Dendritic cell treated with granulocyte-macrophage colony-stimulating factor and Interleukin-4, amounts not matched to agents 40 ng/mL and 50 ng/mL, for 4 days (primary cell): ENCODE measurements at regions of chr1 and their contacts with region 1.

Region 1: GRCh38 chr1:89670163-89670562 is 37.2 kb downstream of the LRRC8C start:
- H3K4me3 Mint-ChIP-seq: peak overlapping the region; percentile 49
- H3K27ac Mint-ChIP-seq: peak overlapping the region; percentile 83
- H3K4me1 Mint-ChIP-seq: peaks cover 77% of the 10 kb centered on the region
- H3K27me3 Mint-ChIP-seq: no peaks in the 10 kb centered on the region

Region 2: DNA sequence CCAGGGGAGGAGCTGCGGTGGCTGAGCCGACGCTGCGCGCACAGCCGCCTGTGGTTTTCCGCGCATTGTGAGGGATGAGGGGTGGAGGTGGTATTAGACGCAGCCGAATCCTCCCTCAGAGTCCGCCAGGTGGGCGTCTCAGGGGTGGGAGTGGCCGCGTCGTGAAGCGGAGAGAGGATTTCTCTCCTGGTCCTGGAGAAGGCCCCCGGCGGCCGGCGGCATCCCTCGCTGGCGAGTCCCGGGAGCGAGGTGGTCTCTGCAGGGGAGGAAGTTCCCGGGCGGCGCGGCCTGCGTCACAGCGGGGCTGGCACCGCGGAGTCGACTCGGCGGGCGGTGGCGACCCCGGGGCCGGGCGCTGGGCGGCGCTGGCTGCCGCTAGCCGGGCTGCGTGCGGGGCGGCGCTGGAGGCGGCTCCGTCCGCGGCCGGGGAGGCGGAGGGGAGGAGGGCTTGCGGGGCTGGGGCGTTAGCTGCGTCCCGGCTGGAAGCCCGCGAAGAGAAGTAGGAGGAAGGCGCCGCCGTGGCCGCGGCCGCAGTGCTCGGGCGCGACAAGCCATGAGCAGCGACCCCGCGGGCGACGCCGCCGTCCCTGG is 37.4 kb before region 1 on chr1 and contains the start of gene LRRC8C:
- intact Hi-C with region 1: loop called (anchors 5 kb)
- H3K4me3 Mint-ChIP-seq: peak within 1 kb of the TSS; percentile 85
- H3K27ac Mint-ChIP-seq: peak within 1 kb of the TSS; percentile 90
- H3K4me1 Mint-ChIP-seq: peaks cover 48% of the 10 kb centered on the region
- H3K27me3 Mint-ChIP-seq: no peaks in the 10 kb centered on the region

Region 3: GRCh38 chr1:89706700-89707012 is 36.5 kb after region 1 on chr1:
- intact Hi-C with region 1: loop called (anchors 5 kb)
- H3K4me3 Mint-ChIP-seq: peak overlapping the region; percentile 26
- H3K27ac Mint-ChIP-seq: peak overlapping the region; percentile 82
- H3K4me1 Mint-ChIP-seq: peaks cover 43% of the 10 kb centered on the region
- H3K27me3 Mint-ChIP-seq: no peaks in the 10 kb centered on the region

Region 4: DNA sequence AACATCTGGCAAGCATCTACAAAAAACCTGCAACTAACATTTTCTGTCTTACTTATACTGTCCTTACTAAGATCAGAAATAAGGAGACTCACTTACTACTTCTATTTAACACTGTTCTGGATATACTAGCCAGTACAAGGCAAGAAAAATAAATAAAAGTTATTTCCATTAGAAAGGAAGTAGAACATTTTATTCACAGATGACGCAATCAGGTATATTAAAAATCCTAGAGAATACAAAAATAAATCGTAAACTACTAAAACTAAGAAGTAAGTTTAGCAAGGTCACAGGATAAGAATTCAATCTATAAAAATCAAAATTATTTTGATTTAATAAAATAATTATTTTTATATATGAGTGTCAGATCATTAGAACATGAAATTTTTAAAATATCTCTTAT is 782.3 kb after region 1 on chr1:
- intact Hi-C with region 1: no loop called
- H3K4me3 Mint-ChIP-seq: no peak overlapping the region
- H3K27ac Mint-ChIP-seq: no peak overlapping the region
- H3K4me1 Mint-ChIP-seq: no peaks in the 10 kb centered on the region
- H3K27me3 Mint-ChIP-seq: no peaks in the 10 kb centered on the region